ENCODE measurements at regions of chr12 and their contacts with region 1.

Region 1: GRCh38 chr12:49121047-49121696 is 10.0 kb downstream of the TUBA1B start:
- DNase-seq: no peak
- H3K4me3 ChIP-seq: no peak overlapping the region
- H3K27ac ChIP-seq: no peak overlapping the region
- H3K4me1 ChIP-seq: no peaks in the 10 kb centered on the region
- H3K27me3 ChIP-seq: no peaks in the 10 kb centered on the region
- CTCF ChIP-seq: peak in 2 of 3 experiments; percentile 55 to 57

Region 2: DNA sequence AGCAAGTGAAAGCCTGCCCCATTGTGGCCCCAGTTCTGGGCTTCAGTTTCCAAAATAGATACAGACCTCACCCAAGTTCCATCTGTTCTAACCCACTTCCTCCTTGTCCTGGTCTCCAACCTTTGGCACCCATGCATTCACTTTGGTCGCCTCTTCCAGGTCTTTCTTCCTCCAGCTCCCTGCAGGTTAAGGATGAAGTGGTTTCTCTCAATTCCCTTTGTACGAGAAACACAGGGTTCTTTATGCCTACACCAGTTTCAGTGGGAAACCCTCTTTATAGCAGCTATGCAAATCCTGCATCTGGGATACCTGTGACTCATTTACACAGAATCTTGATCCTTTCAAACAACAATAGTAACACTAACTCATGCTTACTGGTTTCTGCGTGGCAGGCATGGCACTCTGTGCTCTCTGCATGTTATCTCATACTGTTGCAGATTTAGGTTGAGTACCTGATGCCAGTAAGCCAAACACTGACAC is 1930.9 kb before region 1 on chr12:
- intact Hi-C with region 1: no loop called
- DNase-seq: no peak
- H3K4me3 ChIP-seq: no peak overlapping the region
- H3K27ac ChIP-seq: no peak overlapping the region
- H3K4me1 ChIP-seq: peaks cover 0 to 5% of the 10 kb centered on the region in 2 donors
- H3K27me3 ChIP-seq: no peaks in the 10 kb centered on the region
- CTCF ChIP-seq: no peak

Region 3: DNA sequence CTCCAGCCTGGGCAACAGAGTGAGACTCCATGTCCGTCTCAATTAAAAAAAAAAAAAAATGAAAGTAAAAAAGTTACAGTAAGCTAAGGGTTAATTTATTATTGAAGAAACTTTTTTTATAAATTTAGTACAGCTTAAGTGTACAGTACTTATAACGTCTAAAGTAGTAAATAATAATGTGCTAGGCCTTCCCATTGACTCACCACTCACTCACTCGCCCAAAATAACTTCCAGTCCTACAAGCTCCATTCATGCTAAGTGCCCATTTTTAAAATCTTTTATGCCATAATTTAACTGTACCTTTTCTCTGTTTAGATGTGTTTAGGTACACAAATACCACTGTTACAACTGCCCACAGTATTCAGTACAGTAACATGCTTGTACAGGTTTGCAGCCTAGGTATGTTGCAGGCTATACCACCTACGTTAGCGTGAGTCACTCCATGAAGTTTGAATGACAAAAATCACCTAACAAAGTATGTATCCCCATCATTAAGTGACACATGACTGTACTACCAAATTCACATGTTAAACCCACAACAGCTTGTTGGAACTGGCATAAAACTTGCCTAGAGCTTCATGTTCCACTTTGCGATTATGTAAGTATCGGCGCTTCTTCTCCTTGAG is 449.8 kb before region 1 on chr12:
- intact Hi-C with region 1: no loop called
- DNase-seq: no peak
- H3K4me3 ChIP-seq: no peak overlapping the region
- H3K27ac ChIP-seq: no peak overlapping the region
- H3K4me1 ChIP-seq: no peaks in the 10 kb centered on the region
- H3K27me3 ChIP-seq: no peaks in the 10 kb centered on the region
- CTCF ChIP-seq: no peak

Region 4: GRCh38 chr12:49060237-49061156 is 60.7 kb before region 1 on chr12 and contains the start of gene KMT2D:
- intact Hi-C with region 1: loop called (anchors 1 kb)
- DNase-seq: peak; percentile 30 to 94
- H3K4me3 ChIP-seq: peak within 1 kb of the TSS; percentile 96 to 97
- H3K27ac ChIP-seq: peak within 1 kb of the TSS; percentile 94 to 98
- H3K4me1 ChIP-seq: peaks cover 8 to 25% of the 10 kb centered on the region in 2 donors
- H3K27me3 ChIP-seq: no peaks in the 10 kb centered on the region
- CTCF ChIP-seq: peak; percentile 25 to 83 (median 25)
- total RNA-seq, gene KMT2D: 106 TPM

Region 5: GRCh38 chr12:49088190-49088931 is 32.8 kb before region 1 on chr12:
- intact Hi-C with region 1: loop called (anchors 1 kb)
- DNase-seq: peak; percentile 63 to 86
- H3K4me3 ChIP-seq: peak overlapping the region in 1 of 2 donors; percentile 22
- H3K27ac ChIP-seq: no peak overlapping the region
- H3K4me1 ChIP-seq: peaks cover 12 to 23% of the 10 kb centered on the region in 2 donors
- H3K27me3 ChIP-seq: peaks cover 3% of the 10 kb centered on the region
- CTCF ChIP-seq: peak; percentile 81 to 91 (median 88)

Region 6: DNA sequence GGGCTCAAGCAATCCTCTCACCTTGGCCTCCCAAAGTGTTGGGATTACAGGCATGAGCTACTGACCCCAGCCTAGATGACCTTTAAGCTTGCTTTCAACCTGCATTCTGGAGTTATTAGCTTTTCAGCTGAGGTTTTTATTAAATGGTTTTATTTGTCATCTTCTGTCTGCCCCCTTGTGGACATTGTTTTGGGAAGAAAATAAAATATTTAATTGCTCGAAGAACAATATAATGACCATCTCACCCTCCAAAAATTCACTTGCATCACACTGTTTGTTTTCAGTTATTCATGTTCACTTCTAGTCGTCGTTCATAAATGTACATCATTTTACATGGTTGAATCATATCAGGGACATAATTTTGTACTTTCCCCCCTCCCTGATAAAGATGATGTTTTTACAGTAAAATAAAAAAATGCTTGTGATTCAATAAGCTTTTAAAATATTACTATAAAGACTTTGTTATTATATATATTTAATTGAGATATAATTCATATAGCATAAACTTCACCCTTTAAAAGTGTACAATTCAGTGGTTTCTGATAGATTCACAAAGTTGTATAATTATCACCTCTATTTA is 236.0 kb after region 1 on chr12:
- intact Hi-C with region 1: no loop called
- DNase-seq: no peak
- H3K4me3 ChIP-seq: no peak overlapping the region
- H3K27ac ChIP-seq: no peak overlapping the region
- H3K4me1 ChIP-seq: peaks cover 0 to 3% of the 10 kb centered on the region in 2 donors
- H3K27me3 ChIP-seq: no peaks in the 10 kb centered on the region
- CTCF ChIP-seq: peak; percentile 17 to 46 (median 22)

Region 7: GRCh38 chr12:49623142-49623904 is 502.2 kb after region 1 on chr12 and contains the start of gene PRPF40B:
- intact Hi-C with region 1: no loop called
- DNase-seq: peak; percentile 49 to 93
- H3K4me3 ChIP-seq: peak within 1 kb of the TSS; percentile 49 to 77
- H3K27ac ChIP-seq: peak within 1 kb of the TSS; percentile 89 to 96
- H3K4me1 ChIP-seq: peaks cover 6 to 11% of the 10 kb centered on the region in 2 donors
- H3K27me3 ChIP-seq: no peaks in the 10 kb centered on the region
- CTCF ChIP-seq: peak; percentile 49 to 60 (median 58)
- total RNA-seq, gene PRPF40B: 9.5 TPM